Left ventricle myocardium inferior (tissue), 1 donor: ENCODE measurements at regions of chr4 and their contacts with region 1.

Region 1: DNA sequence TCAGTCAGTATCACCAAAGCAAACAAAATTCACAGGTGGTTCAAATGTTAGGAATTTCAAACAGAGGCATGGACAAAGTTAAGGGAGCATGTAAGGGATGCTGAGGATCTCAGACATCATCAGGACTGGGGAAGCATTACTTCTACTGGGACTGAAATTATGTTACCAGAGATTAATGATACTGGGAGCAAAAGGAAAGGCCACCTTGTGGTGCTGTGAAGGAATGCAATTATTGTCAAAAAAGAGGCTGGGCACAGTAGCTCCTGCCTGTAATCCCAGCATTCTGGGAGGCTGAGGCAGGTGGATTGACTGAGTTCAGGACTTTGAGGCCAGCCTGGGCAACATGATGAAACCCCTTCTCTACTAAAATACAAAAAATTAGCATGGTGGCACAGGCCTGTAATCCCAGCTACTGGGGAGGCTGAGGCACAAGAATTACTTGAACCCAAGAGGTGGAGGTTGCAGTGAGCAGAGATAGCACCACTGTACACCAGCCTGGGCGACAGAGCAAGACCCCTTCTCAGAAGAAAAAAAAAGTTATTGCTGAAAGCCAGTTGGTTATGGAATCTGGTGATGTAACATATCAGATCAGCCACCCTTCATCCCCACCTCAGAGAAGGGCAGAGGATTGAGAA is 954.3 kb downstream of the PCDH7 start:
- DNase-seq: no peak
- H3K4me3 ChIP-seq: no peak overlapping the region
- H3K27ac ChIP-seq: no peak overlapping the region
- H3K4me1 ChIP-seq: no peaks in the 10 kb centered on the region
- H3K27me3 ChIP-seq: no peaks in the 10 kb centered on the region
- CTCF ChIP-seq: peak; percentile 64

Region 2: DNA sequence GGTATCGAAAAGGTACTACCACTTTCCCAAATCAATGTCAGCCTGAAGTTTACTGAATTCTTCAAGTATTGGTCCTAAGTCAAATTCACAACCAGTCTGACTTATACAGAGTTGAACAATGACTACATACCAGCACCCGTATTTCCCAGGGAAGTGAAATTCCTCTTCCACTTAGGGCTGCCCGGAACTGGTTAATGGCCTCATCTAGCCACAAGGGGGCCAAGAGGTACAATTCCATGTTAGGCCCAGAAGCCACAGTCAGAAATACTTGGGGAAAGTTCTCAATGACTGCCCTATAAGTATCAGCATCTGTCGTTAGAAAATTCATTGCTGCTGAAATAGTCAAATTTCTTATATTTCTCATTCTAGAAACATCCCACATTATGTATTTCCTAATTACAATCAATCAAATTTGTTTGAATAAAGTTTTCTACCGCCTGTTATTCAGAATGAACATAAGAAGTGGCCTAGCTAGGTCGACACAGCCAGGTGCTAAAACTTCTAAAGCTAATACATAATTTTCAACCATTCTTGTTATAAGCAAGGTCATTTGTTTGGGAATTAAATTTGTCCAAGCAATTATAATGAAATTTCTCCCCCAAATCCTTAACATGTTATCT is 959.9 kb before region 1 on chr4:
- intact Hi-C with region 1: loop called (anchors 10 kb)
- DNase-seq: peak; percentile 24
- H3K4me3 ChIP-seq: no peak overlapping the region
- H3K27ac ChIP-seq: no peak overlapping the region
- H3K4me1 ChIP-seq: peaks cover 30% of the 10 kb centered on the region
- H3K27me3 ChIP-seq: peaks cover 17% of the 10 kb centered on the region
- CTCF ChIP-seq: peak; percentile 79